ENCODE measurements at regions of chr4 and their contacts with region 1.

Region 1: GRCh38 chr4:74133786-74134499 is 24.0 kb upstream of the MTHFD2L start:
- DNase-seq: peak in 9 of 10 donors; percentile 35 to 86 (median 60)
- H3K4me3 ChIP-seq: no peak overlapping the region
- H3K27ac ChIP-seq: peak overlapping the region in 1 of 59 donors; percentile 16
- H3K27me3 ChIP-seq: no peaks in the 10 kb centered on the region
- CTCF ChIP-seq: peak; percentile 38 to 94 (median 78)

Region 2: DNA sequence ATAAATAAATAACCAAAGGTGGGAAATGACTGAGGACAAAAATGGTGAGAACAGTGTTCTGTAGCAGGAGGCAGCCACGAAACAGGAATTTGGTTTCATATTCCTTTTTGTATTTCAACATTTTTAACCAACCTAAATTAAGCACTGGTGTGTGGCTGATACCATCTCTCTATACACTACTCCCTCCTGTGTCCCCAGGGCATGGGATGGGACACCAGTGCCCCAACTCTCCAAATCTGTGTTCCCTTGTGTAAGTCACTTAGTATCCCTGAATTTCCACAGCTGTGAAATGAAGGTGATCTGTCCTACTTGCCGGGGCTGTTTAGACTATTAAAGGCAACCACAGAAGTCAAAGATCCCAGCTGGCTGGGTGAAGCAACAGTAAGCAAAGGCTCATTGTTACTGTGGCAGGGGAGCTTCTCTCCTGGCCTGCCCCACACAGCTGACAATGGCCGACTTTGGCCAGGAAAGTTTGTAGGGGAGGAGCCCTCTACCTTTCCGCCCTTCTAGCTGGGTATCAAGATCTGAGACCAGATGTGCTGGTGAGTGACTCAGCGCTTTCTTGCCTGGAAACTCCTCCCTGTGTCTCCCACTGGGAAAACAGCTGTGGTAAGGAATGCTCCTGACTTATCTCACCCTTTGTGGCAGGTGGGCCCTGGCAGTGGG is 534.9 kb before region 1 on chr4:
- intact Hi-C with region 1: loop called in 1 of 2 experiments (anchors 5 kb)
- DNase-seq: no peak
- H3K4me3 ChIP-seq: no peak overlapping the region
- H3K27ac ChIP-seq: no peak overlapping the region
- H3K27me3 ChIP-seq: no peaks in the 10 kb centered on the region
- CTCF ChIP-seq: no peak

Region 3: GRCh38 chr4:73662709-73663546 is 471.0 kb before region 1 on chr4:
- intact Hi-C with region 1: loop called (anchors 5 to 10 kb)
- DNase-seq: no peak
- H3K4me3 ChIP-seq: no peak overlapping the region
- H3K27ac ChIP-seq: no peak overlapping the region
- H3K27me3 ChIP-seq: no peaks in the 10 kb centered on the region
- CTCF ChIP-seq: peak in 52 of 56 donors; percentile 13 to 76 (median 49)

Region 4: GRCh38 chr4:73676861-73677323 is 457.1 kb before region 1 on chr4:
- intact Hi-C with region 1: no loop called
- DNase-seq: no peak
- H3K4me3 ChIP-seq: no peak overlapping the region
- H3K27ac ChIP-seq: no peak overlapping the region
- H3K27me3 ChIP-seq: no peaks in the 10 kb centered on the region
- CTCF ChIP-seq: no peak

Region 5: GRCh38 chr4:73729534-73730165 is 404.3 kb before region 1 on chr4:
- intact Hi-C with region 1: loop called (anchors 2 to 10 kb)
- DNase-seq: peak in 9 of 10 donors; percentile 19 to 77 (median 62)
- H3K4me3 ChIP-seq: no peak overlapping the region
- H3K27ac ChIP-seq: no peak overlapping the region
- H3K27me3 ChIP-seq: peaks cover 0 to 6% (median 0%) of the 10 kb centered on the region in 45 donors
- CTCF ChIP-seq: peak; percentile 57 to 87 (median 79)

Region 6: DNA sequence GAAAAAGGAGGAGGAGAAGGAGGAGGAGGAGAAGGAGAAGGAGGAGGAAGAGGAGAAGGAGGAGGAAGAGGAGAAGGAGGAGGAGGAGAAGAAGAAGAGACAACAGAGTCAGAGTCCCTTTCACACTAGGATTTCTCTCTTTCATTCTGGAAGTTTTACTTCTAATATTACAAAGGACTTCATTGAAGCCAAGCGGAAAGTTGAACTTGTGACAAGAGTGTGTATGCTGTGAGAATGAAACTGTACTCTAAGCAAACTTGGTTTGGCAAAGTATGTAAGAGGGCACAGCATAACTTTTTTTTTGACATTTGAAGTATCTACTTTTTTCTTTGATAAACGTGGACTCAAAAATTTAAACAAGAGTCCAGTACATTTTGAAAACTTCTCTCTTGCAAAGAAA is 345.5 kb before region 1 on chr4:
- intact Hi-C with region 1: no loop called
- DNase-seq: no peak
- H3K4me3 ChIP-seq: no peak overlapping the region
- H3K27ac ChIP-seq: no peak overlapping the region
- H3K27me3 ChIP-seq: peaks cover 0 to 2% (median 0%) of the 10 kb centered on the region in 45 donors
- CTCF ChIP-seq: no peak